ENCODE measurements at regions of chr15 and their contacts with region 1.

Region 1: DNA sequence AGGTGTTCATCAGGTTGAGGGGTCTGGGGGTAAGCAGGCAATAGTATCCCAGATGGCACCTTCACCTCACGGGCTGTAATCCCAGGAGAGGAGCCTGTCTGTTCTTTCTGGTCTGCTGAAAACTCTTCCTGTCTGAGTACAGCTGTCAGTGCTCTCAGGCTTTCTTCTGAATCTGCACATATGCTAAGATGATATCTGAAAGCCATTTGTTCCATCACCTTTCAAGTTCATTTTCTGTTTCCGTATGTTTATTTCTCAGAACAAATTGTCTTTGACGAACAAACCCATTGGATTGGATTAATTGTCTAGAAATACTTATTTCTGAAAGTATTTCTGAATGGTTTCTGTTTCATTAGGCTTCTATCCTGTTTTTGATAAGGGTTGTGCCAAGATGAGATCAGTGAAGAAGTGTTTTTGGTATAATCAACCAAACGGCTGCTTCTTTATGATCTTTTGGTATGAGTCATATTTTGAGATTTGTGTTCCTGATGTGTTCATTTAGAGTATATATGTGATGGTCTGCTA is 13.3 kb downstream of the ZNF592 start:
- DNase-seq: no peak
- H3K4me3 ChIP-seq: no peak overlapping the region
- H3K27ac ChIP-seq: peak overlapping the region in 4 of 8 donors; percentile 4 to 67 (median 28)
- H3K4me1 ChIP-seq: peaks cover 41 to 90% (median 66%) of the 10 kb centered on the region in 6 donors
- H3K27me3 ChIP-seq: no peaks in the 10 kb centered on the region
- CTCF ChIP-seq: no peak
- POLR2A ChIP-seq: no peak

Region 2: GRCh38 chr15:84702961-84703482 is 58.6 kb before region 1 on chr15:
- intact Hi-C with region 1: loop called (anchors 10 kb)
- DNase-seq: no peak
- H3K4me3 ChIP-seq: no peak overlapping the region
- H3K27ac ChIP-seq: peak overlapping the region in 5 of 8 donors; percentile 21 to 51 (median 48)
- H3K4me1 ChIP-seq: peaks cover 16 to 95% (median 53%) of the 10 kb centered on the region in 6 donors
- H3K27me3 ChIP-seq: no peaks in the 10 kb centered on the region
- CTCF ChIP-seq: no peak
- POLR2A ChIP-seq: no peak